Naive thymus-derived CD4-positive, alpha-beta T cell (primary cell): ENCODE measurements at regions of chrX and their contacts with region 1.

Region 1: DNA sequence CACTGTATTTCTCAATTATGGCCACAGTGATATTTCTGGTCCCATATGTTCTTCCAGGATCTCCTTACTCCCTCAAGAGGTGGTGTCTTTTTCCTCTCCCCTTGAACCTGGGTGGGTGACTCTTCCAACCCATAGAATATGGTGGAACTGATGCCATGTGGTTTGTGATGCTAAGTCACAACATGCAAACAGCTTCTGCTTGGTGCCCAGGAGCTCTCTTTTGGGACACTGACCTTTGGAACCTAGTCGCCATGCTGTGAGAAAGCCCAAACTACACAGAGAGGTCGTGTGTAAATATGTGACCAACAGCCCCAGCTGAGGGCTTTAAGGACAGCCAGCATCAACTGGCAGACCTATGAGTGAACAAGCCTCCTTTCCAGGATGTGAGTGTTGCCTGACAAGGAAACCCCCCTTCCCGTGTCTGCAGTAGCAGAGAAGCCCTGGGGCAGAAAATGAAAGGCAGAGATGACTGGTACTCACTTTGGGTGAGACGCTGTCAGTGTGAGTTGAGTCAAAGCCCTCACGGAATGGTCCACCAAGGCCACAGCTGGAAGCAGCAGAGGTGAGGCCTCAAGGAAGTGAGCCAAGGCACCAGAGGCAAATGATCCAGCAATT is 223.4 kb downstream of the BCOR start:
- DNase-seq: peak in 3 of 9 donors; percentile 18 to 58 (median 21)
- ATAC-seq: peak; percentile 49
- H3K4me3 ChIP-seq: no peak overlapping the region
- H3K4me3 Mint-ChIP-seq: peak overlapping the region in 1 of 10 donors; percentile 23
- H3K27ac ChIP-seq: no peak overlapping the region
- H3K27ac Mint-ChIP-seq: peak overlapping the region in 2 of 9 donors; percentile 10 to 86
- H3K4me1 ChIP-seq: peaks cover 14 to 19% of the 10 kb centered on the region in 2 donors
- H3K4me1 Mint-ChIP-seq: peaks cover 0 to 35% (median 23%) of the 10 kb centered on the region in 7 donors
- H3K27me3 ChIP-seq: no peaks in the 10 kb centered on the region
- H3K27me3 Mint-ChIP-seq: no peaks in the 10 kb centered on the region

Region 2: DNA sequence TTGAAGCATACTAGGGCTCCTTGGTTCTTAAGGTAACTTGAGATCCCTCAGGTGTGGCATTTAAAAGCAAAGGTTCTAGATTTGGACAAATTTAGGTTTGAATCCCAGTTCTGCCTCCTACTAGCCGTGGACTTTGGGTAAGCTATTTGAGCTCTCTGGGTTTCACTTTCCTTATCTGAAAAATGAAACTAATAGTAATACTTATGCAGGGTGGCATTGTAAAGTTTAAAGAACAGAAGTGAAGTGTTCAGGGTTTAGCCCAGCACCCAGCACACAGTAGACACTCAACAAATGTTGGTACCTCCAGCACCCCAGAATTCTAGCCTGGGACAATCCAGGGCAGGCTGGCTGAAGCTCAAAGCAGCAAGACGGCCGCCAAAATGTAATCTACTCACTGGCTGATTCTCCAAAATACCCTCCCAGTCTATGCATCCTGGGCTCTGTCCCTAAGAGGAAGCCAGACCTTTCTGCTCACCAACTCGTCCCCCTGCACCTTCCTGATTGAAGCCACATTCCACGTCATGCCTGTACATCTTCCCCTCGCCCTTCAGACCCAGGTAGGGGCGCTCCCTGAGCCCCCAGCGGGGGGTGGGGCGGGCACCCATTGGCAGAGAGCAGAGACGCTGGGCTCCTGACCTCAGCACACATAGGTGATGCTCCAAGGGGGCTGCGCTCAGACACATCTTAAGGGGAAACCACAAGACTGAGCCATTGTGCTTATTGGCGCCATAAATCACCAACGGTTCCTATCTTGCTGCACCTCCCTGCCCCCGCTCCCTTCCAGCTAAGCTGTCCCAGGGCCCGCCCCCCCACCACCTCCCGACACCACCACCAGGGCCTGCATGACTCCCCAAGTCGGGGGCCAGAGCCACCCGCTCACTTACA is 62.8 kb after region 1 on chrX:
- CTCF ChIA-PET with region 1: no interaction called
- POLR2A ChIA-PET with region 1: no interaction called
- intact Hi-C with region 1: loop called in 1 of 2 experiments (anchors 5 kb)
- DNase-seq: peak in 3 of 9 donors; percentile 2 to 14 (median 8)
- ATAC-seq: peak; percentile 58
- H3K4me3 ChIP-seq: peak overlapping the region; percentile 50
- H3K4me3 Mint-ChIP-seq: peak overlapping the region; percentile 74 to 84 (median 77)
- H3K27ac ChIP-seq: peak overlapping the region; percentile 55
- H3K27ac Mint-ChIP-seq: peak overlapping the region; percentile 22 to 89 (median 81)
- H3K4me1 ChIP-seq: peaks cover 0 to 6% of the 10 kb centered on the region in 2 donors
- H3K4me1 Mint-ChIP-seq: peaks cover 0 to 16% (median 10%) of the 10 kb centered on the region in 7 donors
- H3K27me3 ChIP-seq: no peaks in the 10 kb centered on the region
- H3K27me3 Mint-ChIP-seq: no peaks in the 10 kb centered on the region